ENCODE measurements at regions of chr15 and their contacts with region 1.

Region 1: DNA sequence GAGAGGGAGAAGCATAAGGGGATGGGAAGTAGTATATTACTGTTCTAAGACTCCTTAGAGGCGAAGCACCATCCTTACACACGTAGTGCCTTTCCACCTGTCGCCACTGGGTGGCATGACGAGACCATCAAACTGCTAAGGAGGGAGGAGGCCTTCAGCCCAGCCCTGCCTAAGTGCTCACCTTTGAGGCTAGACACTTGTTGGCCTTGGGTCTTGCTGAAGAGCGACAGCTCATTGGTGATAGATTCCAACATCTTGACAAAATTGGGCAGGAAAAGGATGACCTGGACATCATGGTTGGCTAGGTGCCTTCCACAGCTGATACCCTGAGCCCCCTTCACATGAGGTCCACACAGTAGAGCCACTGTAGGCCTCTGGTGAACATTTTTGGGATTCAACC is 19.6 kb downstream of the CLK3 start:
- DNase-seq: peak; percentile 61
- ATAC-seq: peak; percentile 64
- H3K4me3 Mint-ChIP-seq: no peak overlapping the region
- H3K27ac Mint-ChIP-seq: no peak overlapping the region
- H3K4me1 Mint-ChIP-seq: peaks cover 18% of the 10 kb centered on the region
- H3K27me3 Mint-ChIP-seq: no peaks in the 10 kb centered on the region
- CTCF ChIP-seq: no peak

Region 2: GRCh38 chr15:74438721-74439316 is 196.4 kb before region 1 on chr15:
- CTCF ChIA-PET with region 1: no interaction called
- POLR2A ChIA-PET with region 1: interaction called, 8 read pairs
- intact Hi-C with region 1: loop called (anchors 5 kb)
- DNase-seq: peak; percentile 67
- ATAC-seq: peak; percentile 53
- H3K4me3 Mint-ChIP-seq: peak overlapping the region; percentile 28
- H3K27ac Mint-ChIP-seq: peak overlapping the region; percentile 73
- H3K4me1 Mint-ChIP-seq: peaks cover 40% of the 10 kb centered on the region
- H3K27me3 Mint-ChIP-seq: no peaks in the 10 kb centered on the region
- CTCF ChIP-seq: peak; percentile 54

Region 3: DNA sequence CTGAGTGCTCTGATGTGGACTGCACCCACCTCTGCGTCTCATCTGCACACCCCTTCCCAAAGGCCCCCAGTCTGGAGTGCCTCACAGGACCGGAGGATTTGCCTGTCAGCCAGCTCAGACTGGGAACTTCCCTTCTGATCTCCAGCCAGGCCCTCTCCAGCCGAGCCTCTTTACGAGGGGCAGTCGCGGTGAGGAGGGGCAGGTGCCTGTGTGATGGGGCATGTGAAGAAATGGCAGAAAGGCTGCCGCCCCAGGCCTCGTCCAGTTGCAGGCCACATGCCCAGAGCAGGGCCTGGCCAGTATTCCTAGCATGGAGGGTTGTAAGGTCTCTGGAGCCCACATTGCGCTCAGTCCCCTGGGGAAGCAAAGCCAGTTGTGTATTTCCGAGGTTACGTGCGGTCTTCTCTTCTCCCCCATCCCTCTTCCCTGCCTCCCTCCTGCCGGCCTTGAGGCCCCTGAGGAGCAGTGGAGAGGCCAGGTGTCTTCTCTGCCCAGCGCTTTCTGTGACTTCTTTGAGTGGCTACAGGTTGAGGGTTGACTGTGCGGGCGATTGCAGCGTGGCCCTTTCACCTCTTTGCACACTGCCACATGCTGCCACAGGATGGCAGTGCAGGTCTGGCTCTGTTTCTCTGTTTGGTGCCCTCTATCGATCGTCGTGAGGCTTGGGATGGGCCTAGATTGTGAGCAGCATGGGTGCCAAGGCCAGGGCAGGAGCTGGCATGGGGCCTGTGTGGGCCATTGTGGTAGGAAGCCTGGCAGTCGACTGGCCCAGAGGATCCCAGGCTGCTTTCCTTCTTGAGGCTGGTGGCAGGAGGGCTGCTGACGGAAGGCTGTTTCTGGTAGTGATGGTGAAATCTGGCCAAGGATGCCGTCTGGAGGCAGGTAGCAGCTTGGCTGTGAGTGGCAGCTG is 14.3 kb before region 1 on chr15:
- CTCF ChIA-PET with region 1: interaction called, 136 read pairs
- POLR2A ChIA-PET with region 1: interaction called, 19 read pairs
- intact Hi-C with region 1: loop called (anchors 1 kb)
- DNase-seq: peak; percentile 59
- ATAC-seq: peak; percentile 97
- H3K4me3 Mint-ChIP-seq: no peak overlapping the region
- H3K27ac Mint-ChIP-seq: peak overlapping the region; percentile 5
- H3K4me1 Mint-ChIP-seq: peaks cover 54% of the 10 kb centered on the region
- H3K27me3 Mint-ChIP-seq: no peaks in the 10 kb centered on the region
- CTCF ChIP-seq: peak; percentile 59

Region 4: GRCh38 chr15:74799856-74800547 is 164.8 kb after region 1 on chr15:
- CTCF ChIA-PET with region 1: interaction called, 9 read pairs
- POLR2A ChIA-PET with region 1: interaction called, 6 read pairs
- intact Hi-C with region 1: loop called (anchors 1 kb)
- DNase-seq: peak; percentile 88
- ATAC-seq: peak; percentile 89
- H3K4me3 Mint-ChIP-seq: peak overlapping the region; percentile 41
- H3K27ac Mint-ChIP-seq: peak overlapping the region; percentile 89
- H3K4me1 Mint-ChIP-seq: peaks cover 64% of the 10 kb centered on the region
- H3K27me3 Mint-ChIP-seq: no peaks in the 10 kb centered on the region
- CTCF ChIP-seq: peak; percentile 67

Region 5: DNA sequence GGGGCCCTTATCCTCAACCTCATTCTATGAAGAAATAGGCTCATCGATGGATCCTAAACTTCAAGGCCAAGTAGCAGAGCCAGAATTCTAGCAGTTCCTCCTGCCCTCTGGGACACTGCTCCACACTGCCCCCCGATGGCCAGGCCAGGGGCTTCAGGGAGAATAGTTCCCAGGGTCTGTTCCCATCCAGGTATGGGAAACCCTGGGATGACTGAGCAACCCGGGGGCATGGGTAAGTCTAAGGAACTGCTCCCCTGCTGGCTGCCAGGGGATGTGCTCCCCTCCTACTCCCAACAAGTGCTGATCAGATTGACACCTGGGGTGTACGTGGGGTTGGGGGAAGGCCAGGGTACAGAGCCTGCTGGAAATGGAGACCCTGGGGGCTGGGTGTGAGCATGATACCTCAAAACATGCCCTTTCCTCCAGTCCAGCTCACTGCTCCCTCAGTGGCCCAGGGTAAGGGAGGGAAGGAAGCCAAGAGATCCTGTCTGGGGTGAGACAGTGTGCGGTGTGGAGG is 200.1 kb after region 1 on chr15:
- CTCF ChIA-PET with region 1: interaction called, 3 read pairs
- POLR2A ChIA-PET with region 1: no interaction called
- intact Hi-C with region 1: loop called (anchors 2 kb)
- DNase-seq: peak; percentile 47
- ATAC-seq: peak; percentile 71
- H3K4me3 Mint-ChIP-seq: no peak overlapping the region
- H3K27ac Mint-ChIP-seq: no peak overlapping the region
- H3K4me1 Mint-ChIP-seq: peaks cover 11% of the 10 kb centered on the region
- H3K27me3 Mint-ChIP-seq: no peaks in the 10 kb centered on the region
- CTCF ChIP-seq: no peak

Region 6: GRCh38 chr15:74950078-74951000 is 315.1 kb after region 1 on chr15:
- CTCF ChIA-PET with region 1: interaction called, 43 read pairs
- POLR2A ChIA-PET with region 1: interaction called, 4 read pairs
- intact Hi-C with region 1: loop called (anchors 1 kb)
- DNase-seq: peak; percentile 54
- ATAC-seq: peak; percentile 99
- H3K4me3 Mint-ChIP-seq: no peak overlapping the region
- H3K27ac Mint-ChIP-seq: no peak overlapping the region
- H3K4me1 Mint-ChIP-seq: peaks cover 4% of the 10 kb centered on the region
- H3K27me3 Mint-ChIP-seq: no peaks in the 10 kb centered on the region
- CTCF ChIP-seq: peak; percentile 24

Measured in activated B cell treated with CpG ODN at 0.5 μM for 24 hours (primary cell).